Activated T-helper 1 cell treated with anti-CD3 and anti-CD28 coated beads, Interleukin-12 subunit alpha, Interleukin-12 subunit beta, Interleukin-2, Interleukin-4 antibody, amounts not matched to agents 30 ng/mL and 10 ng/mL and 1 ng/mL, durations not matched to agents 14 hours and 24 hours and 36 hours (primary cell): ENCODE measurements at regions of chr13 and their contacts with region 1.

Region 1: DNA sequence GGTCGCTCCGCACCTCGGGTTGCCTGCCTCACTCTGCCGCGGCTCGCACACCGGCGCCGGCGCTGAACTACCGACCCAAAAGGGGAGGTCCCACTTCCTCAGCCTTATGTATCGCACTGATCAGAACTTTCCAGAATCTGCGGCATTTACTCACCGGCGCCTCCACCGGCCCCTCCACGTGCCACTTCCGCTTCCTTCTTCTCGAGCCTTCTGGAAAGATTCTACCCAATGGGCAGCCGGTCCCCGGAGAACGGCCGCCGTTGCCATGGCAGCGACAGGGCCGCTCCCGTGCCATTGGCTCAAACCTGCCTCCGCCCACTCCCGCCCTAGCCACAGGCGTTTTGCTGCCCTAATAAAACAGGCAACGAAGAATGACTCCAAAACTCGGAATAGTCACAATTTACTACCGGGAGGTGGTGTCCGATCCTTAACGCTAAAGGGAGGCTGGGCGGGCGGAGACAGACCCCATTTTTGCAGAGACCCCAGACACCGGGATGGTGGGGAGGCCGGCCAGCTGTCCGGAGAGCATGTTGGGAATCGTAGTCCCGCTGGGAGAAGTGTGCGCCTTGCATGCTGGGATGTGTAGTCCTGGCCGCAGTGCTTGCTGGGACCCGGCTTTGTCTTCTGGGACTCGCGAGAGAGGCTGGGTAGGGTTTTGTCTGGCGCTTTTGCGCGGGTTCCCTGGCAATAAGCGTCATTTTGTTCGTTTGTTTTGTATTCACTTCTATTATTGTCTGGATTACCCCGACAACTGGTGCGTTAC is at the start of gene HSPH1:
- DNase-seq: peak; percentile 99
- H3K4me3 Mint-ChIP-seq: peak within 1 kb of the TSS; percentile 98
- H3K27ac Mint-ChIP-seq: peak within 1 kb of the TSS; percentile 96
- H3K4me1 Mint-ChIP-seq: peaks cover 44% of the 10 kb centered on the region
- H3K27me3 Mint-ChIP-seq: no peaks in the 10 kb centered on the region
- total RNA-seq, gene HSPH1: 310 and 326 TPM in 2 replicates

Region 2: DNA sequence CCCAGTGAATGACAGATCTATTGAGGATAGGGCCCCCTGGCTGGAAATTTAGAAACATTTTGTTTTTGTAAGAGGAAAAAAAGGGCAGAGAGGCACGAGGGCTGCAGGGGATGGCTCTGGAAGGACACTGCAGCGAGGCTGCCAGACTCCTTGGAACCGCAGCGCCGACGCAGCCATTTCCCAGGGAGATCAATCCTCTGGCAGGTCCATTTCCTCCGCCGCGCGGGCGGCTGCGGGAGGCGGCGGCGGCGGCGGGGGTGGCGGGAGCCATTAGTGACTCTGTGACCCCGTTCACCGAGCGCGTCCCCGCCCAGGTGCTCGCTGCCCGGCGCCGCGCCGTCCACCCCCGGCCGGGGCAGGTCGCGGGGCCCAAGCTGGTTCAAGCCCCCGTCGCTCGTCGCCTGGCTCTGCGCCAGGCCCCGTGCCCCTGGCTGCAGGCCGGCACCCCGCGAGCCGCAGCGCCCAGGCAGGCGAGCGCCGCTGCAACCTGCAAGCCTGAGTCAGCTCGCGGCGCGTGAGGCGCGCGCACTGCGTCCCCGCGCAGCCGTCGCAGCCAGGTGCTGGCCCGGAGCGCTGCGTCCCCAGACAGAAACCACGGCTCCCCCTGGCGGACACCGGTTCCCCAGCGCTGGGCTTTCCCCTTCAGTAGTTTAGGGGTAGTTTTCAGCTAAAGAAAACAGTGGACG is 1047.3 kb before region 1 on chr13:
- intact Hi-C with region 1: loop called (anchors 10 kb)
- DNase-seq: peak; percentile 86
- H3K4me3 Mint-ChIP-seq: peak overlapping the region; percentile 81
- H3K27ac Mint-ChIP-seq: no peak overlapping the region
- H3K4me1 Mint-ChIP-seq: peaks cover 44% of the 10 kb centered on the region
- H3K27me3 Mint-ChIP-seq: peaks cover 18% of the 10 kb centered on the region

Region 3: GRCh38 chr13:30235216-30235615 is 926.8 kb before region 1 on chr13:
- intact Hi-C with region 1: no loop called
- DNase-seq: no peak
- H3K4me3 Mint-ChIP-seq: no peak overlapping the region
- H3K27ac Mint-ChIP-seq: no peak overlapping the region
- H3K4me1 Mint-ChIP-seq: no peaks in the 10 kb centered on the region
- H3K27me3 Mint-ChIP-seq: no peaks in the 10 kb centered on the region

Region 4: DNA sequence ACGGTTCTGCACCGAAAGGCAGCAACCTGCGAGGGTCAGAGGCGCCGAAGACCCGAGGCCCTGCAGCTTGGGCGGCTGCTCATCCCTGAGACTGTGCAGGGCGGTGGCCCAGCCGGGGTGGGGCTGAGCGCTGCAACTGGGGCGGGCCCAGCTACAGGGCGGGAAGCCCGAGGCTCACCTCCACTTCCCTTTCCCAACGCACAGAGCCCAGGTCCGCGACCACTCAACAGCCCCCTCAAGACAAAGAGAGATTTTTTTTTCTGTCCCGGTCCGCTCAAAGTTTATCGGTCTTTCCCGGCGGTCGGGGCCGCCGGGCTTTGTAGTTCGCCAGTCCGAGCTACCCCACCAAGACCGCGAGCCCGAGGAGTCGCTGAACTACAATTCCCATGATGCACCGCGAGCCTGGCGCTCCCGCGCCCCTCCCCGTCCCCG is 855.2 kb before region 1 on chr13:
- intact Hi-C with region 1: loop called (anchors 10 kb)
- DNase-seq: peak; percentile 90
- H3K4me3 Mint-ChIP-seq: peak overlapping the region; percentile 88
- H3K27ac Mint-ChIP-seq: peak overlapping the region; percentile 84
- H3K4me1 Mint-ChIP-seq: peaks cover 65% of the 10 kb centered on the region
- H3K27me3 Mint-ChIP-seq: no peaks in the 10 kb centered on the region

Region 5: DNA sequence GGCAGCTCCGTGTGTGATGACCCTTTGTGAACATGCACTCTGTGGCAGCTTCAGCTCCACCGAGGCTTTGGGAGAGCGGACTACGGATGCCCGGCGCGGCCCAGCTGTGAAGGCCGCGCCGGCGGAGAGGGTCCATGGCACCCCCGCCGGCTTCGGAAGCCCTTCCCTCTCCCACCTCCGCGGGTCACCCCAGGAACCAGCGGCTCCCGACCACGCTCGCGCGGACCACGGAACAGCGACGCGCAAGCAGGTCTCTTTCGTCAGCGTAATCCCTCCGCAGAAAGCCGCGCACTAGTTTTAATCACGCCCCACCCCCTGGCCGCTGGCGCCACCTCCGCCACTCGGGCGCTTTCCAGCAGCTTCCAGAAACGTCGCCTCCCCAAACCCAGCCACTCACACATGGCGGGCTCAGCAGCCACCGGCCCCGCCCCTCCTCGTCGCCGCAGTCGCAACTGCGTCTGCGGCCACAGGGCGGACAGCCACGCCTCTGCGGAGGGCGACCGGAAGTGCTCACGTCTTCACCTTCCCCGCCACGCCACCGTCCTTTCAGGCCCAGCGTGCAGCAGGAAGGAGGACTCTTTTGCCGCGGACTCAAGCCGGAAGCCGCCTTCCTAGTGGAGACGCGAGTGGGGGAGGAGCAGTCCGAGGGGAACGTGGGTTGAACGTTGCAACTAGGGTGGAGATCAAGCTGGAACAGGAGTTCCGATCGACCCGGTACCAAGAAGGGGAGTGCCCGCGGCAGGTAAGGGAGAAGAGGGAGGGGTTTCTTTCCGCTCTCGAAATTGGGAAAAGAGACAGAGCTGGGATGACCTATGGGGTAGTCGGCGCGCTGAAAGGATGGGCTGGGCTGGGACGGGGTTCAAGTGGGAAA is 544.5 kb before region 1 on chr13 and contains the start of gene USPL1:
- intact Hi-C with region 1: loop called (anchors 1 kb)
- DNase-seq: peak; percentile 99
- H3K4me3 Mint-ChIP-seq: no peak within 1 kb of the TSS
- H3K27ac Mint-ChIP-seq: no peak within 1 kb of the TSS
- H3K4me1 Mint-ChIP-seq: peaks cover 12% of the 10 kb centered on the region
- H3K27me3 Mint-ChIP-seq: no peaks in the 10 kb centered on the region
- total RNA-seq, gene USPL1: 17.2 and 17.5 TPM in 2 replicates

Region 6: GRCh38 chr13:31134039-31134711 is 27.8 kb before region 1 on chr13:
- intact Hi-C with region 1: loop called (anchors 1 kb)
- DNase-seq: no peak
- H3K4me3 Mint-ChIP-seq: peak overlapping the region; percentile 27
- H3K27ac Mint-ChIP-seq: peak overlapping the region; percentile 95
- H3K4me1 Mint-ChIP-seq: peaks cover 67% of the 10 kb centered on the region
- H3K27me3 Mint-ChIP-seq: no peaks in the 10 kb centered on the region